ENCODE measurements at regions of chr12 and their contacts with region 1.

Region 1: GRCh38 chr12:106955377-106956047 is at the start of gene TMEM263:
- DNase-seq: peak; percentile 95
- ATAC-seq: peak; percentile 86
- H3K4me3 ChIP-seq: peak within 1 kb of the TSS; percentile 85
- H3K27ac ChIP-seq: peak within 1 kb of the TSS; percentile 90
- H3K4me1 ChIP-seq: peaks cover 4% of the 10 kb centered on the region
- H3K27me3 ChIP-seq: no peaks in the 10 kb centered on the region
- CTCF ChIP-seq: no peak
- POLR2A ChIP-seq: peak; percentile 97
- RAD21 ChIP-seq: no peak
- total RNA-seq, gene TMEM263: 99.7 and 154 TPM in 2 replicates

Region 2: DNA sequence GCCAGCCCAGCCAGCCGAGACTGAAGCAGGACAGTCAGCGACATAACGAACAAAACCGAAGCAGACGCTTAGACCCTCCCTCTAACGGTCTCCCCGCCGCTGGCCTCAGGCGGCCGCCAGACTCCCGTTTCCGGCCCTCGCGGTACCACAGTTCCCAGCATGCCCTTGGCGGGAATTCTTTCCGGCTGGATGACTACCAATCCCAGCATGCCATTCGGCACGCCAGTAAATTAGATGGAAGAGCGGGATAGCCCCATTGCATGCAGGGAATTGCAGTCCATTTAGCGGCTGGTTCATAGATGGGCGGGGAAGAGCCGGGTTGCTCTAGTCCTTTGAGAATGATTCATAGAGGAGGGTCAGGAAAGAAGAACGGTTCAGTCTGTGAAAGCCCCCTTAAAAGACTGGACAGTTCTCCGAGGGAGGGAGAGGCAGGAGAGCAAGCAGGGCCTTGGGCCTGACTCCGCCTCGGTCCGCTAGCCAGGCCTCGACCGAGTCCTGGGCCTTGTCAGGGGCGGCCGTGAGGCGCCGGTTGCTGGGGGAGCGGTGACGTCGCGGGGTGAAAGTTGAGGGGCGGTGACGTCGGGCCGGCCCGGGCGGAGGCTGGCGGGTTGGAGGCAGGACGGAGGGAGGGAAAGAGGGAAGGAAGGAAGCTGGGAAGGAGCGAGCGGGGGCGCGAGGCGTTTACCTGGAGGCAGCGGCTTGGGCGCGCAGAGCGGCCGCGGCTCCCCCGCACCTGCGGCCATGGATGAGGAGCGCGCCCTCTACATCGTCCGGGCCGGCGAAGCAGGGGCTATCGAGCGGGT is 181.3 kb before region 1 on chr12 and contains the start of gene RIC8B:
- CTCF ChIA-PET with region 1: no interaction called
- POLR2A ChIA-PET with region 1: no interaction called
- dilution Hi-C with region 1: no loop called
- in situ Hi-C with region 1: no loop called
- intact Hi-C with region 1: loop called (anchors 1 kb)
- DNase-seq: peak; percentile 99
- ATAC-seq: peak; percentile 97
- H3K4me3 ChIP-seq: peak within 1 kb of the TSS; percentile 76
- H3K27ac ChIP-seq: peak within 1 kb of the TSS; percentile 98
- H3K4me1 ChIP-seq: no peaks in the 10 kb centered on the region; the same call in 1 of the 2 replicates
- H3K27me3 ChIP-seq: no peaks in the 10 kb centered on the region
- CTCF ChIP-seq: no peak
- POLR2A ChIP-seq: peak; percentile 94
- RAD21 ChIP-seq: no peak
- total RNA-seq, gene RIC8B: 16.7 and 19.5 TPM in 2 replicates

Region 3: GRCh38 chr12:106973545-106973944 is 18.0 kb after region 1 on chr12:
- CTCF ChIA-PET with region 1: no interaction called
- POLR2A ChIA-PET with region 1: interaction called, 4 read pairs
- dilution Hi-C with region 1: no loop called
- in situ Hi-C with region 1: no loop called
- intact Hi-C with region 1: loop called (anchors 2 kb)
- DNase-seq: no peak
- ATAC-seq: no peak
- H3K4me3 ChIP-seq: no peak overlapping the region
- H3K27ac ChIP-seq: no peak overlapping the region
- H3K4me1 ChIP-seq: peaks cover 5% of the 10 kb centered on the region
- H3K27me3 ChIP-seq: no peaks in the 10 kb centered on the region
- CTCF ChIP-seq: no peak
- POLR2A ChIP-seq: no peak
- RAD21 ChIP-seq: no peak

Region 4: GRCh38 chr12:107115119-107115518 is 159.6 kb after region 1 on chr12:
- CTCF ChIA-PET with region 1: no interaction called
- POLR2A ChIA-PET with region 1: no interaction called
- dilution Hi-C with region 1: no loop called
- in situ Hi-C with region 1: no loop called
- intact Hi-C with region 1: no loop called
- DNase-seq: no peak
- ATAC-seq: no peak
- H3K4me3 ChIP-seq: no peak overlapping the region
- H3K27ac ChIP-seq: no peak overlapping the region
- H3K4me1 ChIP-seq: no peaks in the 10 kb centered on the region
- H3K27me3 ChIP-seq: peaks cover 33% of the 10 kb centered on the region
- CTCF ChIP-seq: no peak
- POLR2A ChIP-seq: no peak
- RAD21 ChIP-seq: no peak